Gastrocnemius medialis (tissue), 4 donors: ENCODE measurements at regions of chr12 and their contacts with region 1.

Region 1: DNA sequence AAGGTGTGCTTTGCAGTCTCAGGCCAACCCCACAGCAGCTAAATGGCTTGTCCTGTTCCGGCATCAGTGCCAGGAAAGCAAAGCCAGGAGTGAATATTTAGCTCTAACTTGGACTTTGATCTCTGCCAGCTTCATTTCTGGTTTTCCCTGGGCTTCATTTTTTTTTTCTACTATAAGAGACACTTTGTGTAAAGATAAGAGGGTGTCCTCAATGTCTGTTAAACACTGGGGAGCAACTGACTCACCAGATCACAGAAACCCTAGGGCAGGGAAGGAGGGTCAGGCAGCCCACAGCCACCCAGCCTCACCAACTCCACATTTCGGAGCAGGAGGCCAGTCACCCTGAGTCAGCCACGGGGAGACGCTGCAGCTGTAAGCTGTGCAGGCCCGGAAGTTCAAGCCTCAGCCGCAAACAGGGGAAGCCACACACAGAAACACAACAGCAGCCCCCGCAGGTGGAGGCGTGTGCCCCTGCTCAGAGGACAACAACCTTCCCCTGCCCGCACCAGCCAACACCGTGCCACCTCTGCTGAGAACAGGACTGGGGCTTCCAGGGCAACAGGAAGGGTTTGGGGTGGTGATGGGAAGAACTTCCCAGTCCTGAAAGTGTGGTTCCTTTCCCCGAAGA is 6.3 kb downstream of the TNFRSF1A start:
- DNase-seq: peak; percentile 69 to 83
- ATAC-seq: peak; percentile 48 to 50
- H3K4me3 ChIP-seq: peak overlapping the region; percentile 58 to 99 (median 78)
- H3K27ac ChIP-seq: peak overlapping the region; percentile 92 to 99 (median 96)
- H3K4me1 ChIP-seq: peaks cover 56 to 59% of the 10 kb centered on the region in 2 donors
- H3K27me3 ChIP-seq: no peaks in the 10 kb centered on the region
- CTCF ChIP-seq: peak in 4 of 5 experiments; percentile 40 to 66 (median 59)
- POLR2A ChIP-seq: no peak

Region 2: GRCh38 chr12:6383572-6384498 is 48.3 kb after region 1 on chr12 and contains the start of gene LTBR:
- in situ Hi-C with region 1: loop called in 3 of 4 experiments (anchors 5 to 10 kb)
- intact Hi-C with region 1: loop called (anchors 1 kb)
- DNase-seq: peak; percentile 97
- ATAC-seq: peak; percentile 91
- H3K4me3 ChIP-seq: peak within 1 kb of the TSS; percentile 70 to 98 (median 85)
- H3K27ac ChIP-seq: peak within 1 kb of the TSS; percentile 88 to 99 (median 95)
- H3K4me1 ChIP-seq: peaks cover 21 to 28% of the 10 kb centered on the region in 2 donors
- H3K27me3 ChIP-seq: no peaks in the 10 kb centered on the region
- CTCF ChIP-seq: peak; percentile 3 to 43 (median 23)
- POLR2A ChIP-seq: peak; percentile 75 to 79
- total RNA-seq, gene LTBR: 40.2 to 98.6 (median 43.7) TPM

Region 3: DNA sequence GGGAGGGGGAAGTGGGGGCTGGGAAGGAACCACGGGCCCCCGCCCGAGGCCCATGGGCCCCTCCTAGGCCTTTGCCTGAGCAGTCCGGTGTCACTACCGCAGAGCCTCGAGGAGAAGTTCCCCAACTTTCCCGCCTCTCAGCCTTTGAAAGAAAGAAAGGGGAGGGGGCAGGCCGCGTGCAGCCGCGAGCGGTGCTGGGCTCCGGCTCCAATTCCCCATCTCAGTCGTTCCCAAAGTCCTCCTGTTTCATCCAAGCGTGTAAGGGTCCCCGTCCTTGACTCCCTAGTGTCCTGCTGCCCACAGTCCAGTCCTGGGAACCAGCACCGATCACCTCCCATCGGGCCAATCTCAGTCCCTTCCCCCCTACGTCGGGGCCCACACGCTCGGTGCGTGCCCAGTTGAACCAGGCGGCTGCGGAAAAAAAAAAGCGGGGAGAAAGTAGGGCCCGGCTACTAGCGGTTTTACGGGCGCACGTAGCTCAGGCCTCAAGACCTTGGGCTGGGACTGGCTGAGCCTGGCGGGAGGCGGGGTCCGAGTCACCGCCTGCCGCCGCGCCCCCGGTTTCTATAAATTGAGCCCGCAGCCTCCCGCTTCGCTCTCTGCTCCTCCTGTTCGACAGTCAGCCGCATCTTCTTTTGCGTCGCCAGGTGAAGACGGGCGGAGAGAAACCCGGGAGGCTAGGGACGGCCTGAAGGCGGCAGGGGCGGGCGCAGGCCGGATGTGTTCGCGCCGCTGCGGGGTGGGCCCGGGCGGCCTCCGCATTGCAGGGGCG is 198.5 kb after region 1 on chr12 and contains the start of gene GAPDH:
- in situ Hi-C with region 1: no loop called
- intact Hi-C with region 1: loop called (anchors 5 kb)
- DNase-seq: peak; percentile 89 to 93
- ATAC-seq: peak; percentile 66 to 70
- H3K4me3 ChIP-seq: peak within 1 kb of the TSS; percentile 75 to 87 (median 76)
- H3K27ac ChIP-seq: peak within 1 kb of the TSS; percentile 91 to 97 (median 96)
- H3K4me1 ChIP-seq: peaks cover 35 to 47% of the 10 kb centered on the region in 2 donors
- H3K27me3 ChIP-seq: no peaks in the 10 kb centered on the region
- CTCF ChIP-seq: peak in 1 of 5 experiments; percentile 3
- POLR2A ChIP-seq: peak; percentile 95 to 96
- total RNA-seq, gene GAPDH: 11,241 to 15,891 (median 13,472) TPM

Region 4: DNA sequence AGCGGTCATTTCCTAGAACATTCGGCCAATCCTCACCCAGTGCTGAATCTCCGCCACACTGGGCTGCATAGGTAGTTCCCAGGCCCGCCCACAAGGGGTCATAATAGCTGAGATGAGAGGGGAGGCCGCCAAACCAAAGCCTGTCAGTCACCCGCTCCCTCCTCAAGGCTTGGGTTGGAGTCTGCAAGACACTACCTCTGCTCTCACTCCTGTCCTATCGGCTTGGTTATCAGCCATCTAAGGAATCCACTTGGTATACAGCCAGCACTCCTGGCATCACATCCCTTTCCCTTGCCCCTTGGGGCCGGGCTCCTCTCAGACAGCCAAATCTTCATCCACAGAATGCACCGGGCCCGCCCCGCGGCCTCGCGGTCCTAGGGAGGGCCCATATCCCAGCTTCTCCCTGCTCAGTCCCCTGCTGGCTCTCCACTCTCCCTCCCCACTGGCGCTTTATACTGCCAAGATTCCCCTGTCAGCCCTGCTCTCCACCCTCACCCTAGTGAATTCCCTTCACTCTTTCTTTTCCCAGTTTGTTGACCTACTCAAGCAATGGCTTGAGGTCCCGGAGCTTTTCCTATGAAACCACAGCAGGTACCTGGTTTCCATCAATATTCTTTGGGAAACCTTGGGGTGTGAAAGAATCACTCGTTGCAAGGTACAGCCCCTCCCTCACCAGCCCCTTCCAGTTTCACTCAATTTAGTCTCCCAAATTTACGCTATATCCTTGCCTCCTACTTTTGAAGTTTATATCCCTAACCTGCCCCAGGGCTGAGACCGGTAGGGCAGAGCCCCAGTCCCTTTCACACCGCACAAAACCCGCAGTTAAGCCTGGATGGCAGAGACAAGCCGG is 218.8 kb after region 1 on chr12:
- in situ Hi-C with region 1: no loop called
- intact Hi-C with region 1: loop called (anchors 2 kb)
- DNase-seq: peak; percentile 64 to 87
- ATAC-seq: peak; percentile 26 to 29
- H3K4me3 ChIP-seq: peak overlapping the region; percentile 67 to 88 (median 77)
- H3K27ac ChIP-seq: peak overlapping the region; percentile 90 to 99 (median 92)
- H3K4me1 ChIP-seq: peaks cover 66% of the 10 kb centered on the region in 2 donors
- H3K27me3 ChIP-seq: no peaks in the 10 kb centered on the region
- CTCF ChIP-seq: peak in 4 of 5 experiments; percentile 64 to 70 (median 68)
- POLR2A ChIP-seq: no peak